PC-3 (cell line): ENCODE measurements at regions of chr4 and their contacts with region 1.

Region 1: DNA sequence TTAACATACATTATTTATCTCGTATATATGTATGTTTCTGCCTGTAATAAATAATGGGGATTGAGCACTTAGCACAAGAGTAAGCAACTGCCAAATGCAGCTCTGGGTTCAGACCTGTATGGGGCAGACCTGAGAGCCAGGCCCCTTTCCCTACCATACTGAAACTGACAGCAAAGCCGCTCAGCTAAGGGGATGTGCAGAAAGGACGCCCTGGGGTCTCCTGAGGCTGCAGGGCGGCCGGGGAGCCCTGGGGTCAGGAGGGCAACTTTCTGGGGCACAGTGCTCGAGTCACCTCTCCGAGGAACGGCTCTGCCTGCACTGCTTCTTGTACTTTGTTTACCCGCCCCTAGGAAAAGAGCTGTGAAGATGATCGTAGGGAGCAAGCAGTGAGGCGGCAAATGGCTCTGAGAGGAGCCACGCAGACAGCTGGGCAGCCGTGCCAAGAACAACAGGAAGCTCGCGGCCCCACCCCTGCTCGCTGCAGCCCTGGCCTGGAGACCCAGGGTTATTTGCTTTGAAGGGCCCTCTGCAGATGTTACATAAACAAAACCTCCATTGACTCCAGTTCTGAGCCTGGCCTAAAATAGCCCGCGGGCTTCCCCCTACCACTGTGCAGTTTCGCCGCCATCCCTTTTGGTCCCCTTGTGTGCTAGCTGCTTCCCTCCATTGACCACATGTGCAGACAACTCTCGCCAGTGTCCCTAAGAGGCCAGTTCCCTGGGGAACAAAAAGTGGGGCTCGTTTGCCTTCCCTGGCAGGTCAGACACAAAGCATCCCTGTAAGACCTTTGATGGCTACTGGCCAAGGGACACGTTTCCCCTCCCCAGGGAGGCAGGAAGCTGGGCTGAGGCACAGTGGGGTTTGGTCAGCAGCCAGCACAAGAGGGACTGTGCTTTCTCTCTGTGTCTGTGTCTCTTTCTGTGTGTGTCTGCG is 111.3 kb upstream of the LNX1 start:
- DNase-seq: peak; percentile 86
- ATAC-seq: peak; percentile 88
- H3K4me3 ChIP-seq: peak overlapping the region; percentile 63
- H3K27ac ChIP-seq: peak overlapping the region; percentile 88
- H3K4me1 ChIP-seq: peaks cover 34% of the 10 kb centered on the region
- H3K27me3 ChIP-seq: no peaks in the 10 kb centered on the region
- CTCF ChIP-seq: 0 out of 2 replicates have a peak, but pooled peaks have one; percentile 15

Region 2: DNA sequence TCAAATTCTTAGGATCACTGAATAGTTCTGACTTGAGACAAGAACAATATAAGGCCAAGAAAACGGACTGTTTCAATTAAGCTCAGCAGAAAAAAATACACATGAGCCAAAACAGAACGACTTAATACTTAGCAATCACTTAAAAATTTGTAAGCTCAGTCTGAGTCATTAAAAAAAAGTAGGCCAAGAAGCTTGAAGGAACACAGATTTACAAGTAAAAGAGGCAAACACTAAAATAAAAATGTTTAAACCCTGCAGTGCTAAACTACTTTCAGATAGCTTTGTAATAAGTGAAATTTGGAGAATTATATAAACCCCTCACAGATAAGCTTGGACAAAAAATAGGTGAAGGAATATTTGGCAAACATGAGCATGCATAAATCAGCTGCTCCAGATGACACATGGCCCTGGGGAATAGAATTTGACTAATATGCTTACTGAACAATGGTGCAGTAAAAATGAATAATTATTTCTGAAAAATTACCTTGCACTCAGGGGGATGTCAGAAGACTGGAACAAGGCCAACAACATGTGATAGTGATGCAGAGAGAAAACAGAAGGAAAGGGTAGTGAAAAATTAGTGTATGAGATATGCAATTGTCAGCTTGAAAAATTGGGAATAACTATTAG is 160.9 kb before region 1 on chr4:
- CTCF ChIA-PET with region 1: no interaction called
- POLR2A ChIA-PET with region 1: interaction called, 4 read pairs
- intact Hi-C with region 1: loop called (anchors 10 kb)
- DNase-seq: peak; percentile 83
- ATAC-seq: peak; percentile 78
- H3K4me3 ChIP-seq: no peak overlapping the region; the same call in 1 of the 2 replicates
- H3K27ac ChIP-seq: peak overlapping the region; percentile 71
- H3K4me1 ChIP-seq: peaks cover 35% of the 10 kb centered on the region
- H3K27me3 ChIP-seq: no peaks in the 10 kb centered on the region
- CTCF ChIP-seq: no peak

Region 3: GRCh38 chr4:53821179-53821851 is 118.7 kb after region 1 on chr4:
- CTCF ChIA-PET with region 1: no interaction called
- POLR2A ChIA-PET with region 1: no interaction called
- intact Hi-C with region 1: no loop called
- DNase-seq: no peak
- ATAC-seq: no peak
- H3K4me3 ChIP-seq: no peak overlapping the region
- H3K27ac ChIP-seq: no peak overlapping the region
- H3K4me1 ChIP-seq: no peaks in the 10 kb centered on the region
- H3K27me3 ChIP-seq: no peaks in the 10 kb centered on the region
- CTCF ChIP-seq: no peak